ENCODE measurements at regions of chr12 and their contacts with region 1.

Region 1: DNA sequence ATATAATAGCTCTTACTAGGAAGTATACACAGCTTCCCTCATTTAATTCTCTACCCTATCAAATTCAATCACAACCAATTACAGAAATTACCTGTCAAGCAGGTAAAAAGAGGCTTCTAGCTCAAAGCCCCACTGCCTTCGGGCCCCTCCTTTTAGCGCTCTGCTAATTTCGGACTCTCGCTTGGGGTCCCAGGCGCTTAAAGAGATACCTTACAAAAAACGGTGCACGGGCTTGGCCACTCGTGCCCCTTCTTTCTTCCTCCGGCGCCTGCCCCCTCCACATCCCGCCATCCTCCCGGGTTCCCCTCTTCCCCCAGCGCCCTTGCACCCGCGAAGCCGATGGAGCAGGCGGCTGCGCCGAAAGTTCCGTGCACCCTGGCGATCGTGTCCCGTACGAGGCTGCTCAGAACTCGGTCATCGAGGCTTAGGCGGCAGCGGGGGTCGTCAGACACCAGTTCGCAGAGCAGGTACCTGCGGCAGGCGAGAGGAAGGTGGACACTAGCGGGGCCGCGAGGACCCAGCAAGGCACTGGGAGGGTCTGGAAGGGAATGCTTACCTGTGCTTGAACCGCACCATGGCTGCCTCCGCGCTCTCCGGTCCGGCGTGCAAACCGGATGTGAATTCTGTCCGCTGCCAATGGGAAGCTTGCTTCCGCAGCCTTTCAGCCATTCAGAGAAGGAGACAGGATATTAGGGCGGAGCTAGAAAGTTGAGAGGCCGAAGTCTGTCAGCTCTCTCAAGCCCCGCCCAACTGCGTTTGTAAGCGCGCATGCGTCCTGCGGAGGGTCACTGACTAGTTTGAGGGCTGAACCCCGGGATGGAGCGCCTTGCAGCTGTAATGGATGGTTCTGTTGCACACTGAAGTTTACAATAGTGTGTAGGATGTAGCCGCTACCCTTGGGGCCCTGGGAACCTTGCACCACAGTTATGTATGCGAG is at the start of gene POP5:
- DNase-seq: peak; percentile 96
- ATAC-seq: peak; percentile 89
- H3K4me3 ChIP-seq: peak within 1 kb of the TSS; percentile 82 to 95
- H3K27ac ChIP-seq: peak within 1 kb of the TSS; percentile 51
- H3K4me1 ChIP-seq: peaks cover 6 to 33% of the 10 kb centered on the region in 2 experiments
- H3K27me3 ChIP-seq: no peaks in the 10 kb centered on the region
- CTCF ChIP-seq: no peak
- POLR2A ChIP-seq: peak; percentile 44
- RAD21 ChIP-seq: no peak
- total RNA-seq, gene POP5: 66.9 TPM

Region 2: DNA sequence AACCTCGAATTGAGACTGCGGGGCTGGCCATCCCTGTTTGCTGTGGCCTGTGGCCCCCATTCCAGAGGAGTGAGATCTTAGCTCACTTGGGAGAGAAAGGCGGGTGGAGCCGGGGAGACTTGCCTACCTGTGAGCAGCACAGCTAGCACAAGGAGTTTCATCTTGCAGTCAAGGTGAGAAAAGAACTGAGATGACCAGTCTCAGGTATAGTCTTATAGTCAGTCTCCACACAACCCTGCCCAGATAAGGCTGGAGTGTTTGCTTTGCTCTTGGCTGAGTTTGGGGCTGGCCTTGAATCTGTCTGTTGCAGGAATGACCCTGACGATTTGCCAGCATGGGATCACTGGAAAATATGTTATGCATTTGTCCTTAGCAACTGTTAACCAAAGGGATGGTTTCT is 253.5 kb before region 1 on chr12 and contains the start of gene PLA2G1B:
- CTCF ChIA-PET with region 1: no interaction called
- POLR2A ChIA-PET with region 1: no interaction called
- RAD21 ChIA-PET with region 1: interaction called in 1 of 2 experiments, 3 read pairs
- intact Hi-C with region 1: loop called (anchors 5 kb)
- DNase-seq: no peak
- ATAC-seq: no peak
- H3K4me3 ChIP-seq: no peak within 1 kb of the TSS
- H3K27ac ChIP-seq: no peak within 1 kb of the TSS
- H3K4me1 ChIP-seq: peaks cover 0 to 8% of the 10 kb centered on the region in 2 experiments; a peak in 1 of 4 replicates
- H3K27me3 ChIP-seq: no peaks in the 10 kb centered on the region
- CTCF ChIP-seq: no peak
- POLR2A ChIP-seq: no peak
- RAD21 ChIP-seq: no peak
- total RNA-seq, gene PLA2G1B: 2.0 TPM

Region 3: GRCh38 chr12:120508537-120508936 is 72.5 kb before region 1 on chr12:
- CTCF ChIA-PET with region 1: no interaction called
- POLR2A ChIA-PET with region 1: no interaction called
- RAD21 ChIA-PET with region 1: no interaction called
- intact Hi-C with region 1: no loop called
- DNase-seq: no peak
- ATAC-seq: no peak
- H3K4me3 ChIP-seq: no peak overlapping the region
- H3K27ac ChIP-seq: no peak overlapping the region
- H3K4me1 ChIP-seq: no peaks in the 10 kb centered on the region
- H3K27me3 ChIP-seq: no peaks in the 10 kb centered on the region
- CTCF ChIP-seq: no peak
- POLR2A ChIP-seq: no peak
- RAD21 ChIP-seq: no peak

Region 4: DNA sequence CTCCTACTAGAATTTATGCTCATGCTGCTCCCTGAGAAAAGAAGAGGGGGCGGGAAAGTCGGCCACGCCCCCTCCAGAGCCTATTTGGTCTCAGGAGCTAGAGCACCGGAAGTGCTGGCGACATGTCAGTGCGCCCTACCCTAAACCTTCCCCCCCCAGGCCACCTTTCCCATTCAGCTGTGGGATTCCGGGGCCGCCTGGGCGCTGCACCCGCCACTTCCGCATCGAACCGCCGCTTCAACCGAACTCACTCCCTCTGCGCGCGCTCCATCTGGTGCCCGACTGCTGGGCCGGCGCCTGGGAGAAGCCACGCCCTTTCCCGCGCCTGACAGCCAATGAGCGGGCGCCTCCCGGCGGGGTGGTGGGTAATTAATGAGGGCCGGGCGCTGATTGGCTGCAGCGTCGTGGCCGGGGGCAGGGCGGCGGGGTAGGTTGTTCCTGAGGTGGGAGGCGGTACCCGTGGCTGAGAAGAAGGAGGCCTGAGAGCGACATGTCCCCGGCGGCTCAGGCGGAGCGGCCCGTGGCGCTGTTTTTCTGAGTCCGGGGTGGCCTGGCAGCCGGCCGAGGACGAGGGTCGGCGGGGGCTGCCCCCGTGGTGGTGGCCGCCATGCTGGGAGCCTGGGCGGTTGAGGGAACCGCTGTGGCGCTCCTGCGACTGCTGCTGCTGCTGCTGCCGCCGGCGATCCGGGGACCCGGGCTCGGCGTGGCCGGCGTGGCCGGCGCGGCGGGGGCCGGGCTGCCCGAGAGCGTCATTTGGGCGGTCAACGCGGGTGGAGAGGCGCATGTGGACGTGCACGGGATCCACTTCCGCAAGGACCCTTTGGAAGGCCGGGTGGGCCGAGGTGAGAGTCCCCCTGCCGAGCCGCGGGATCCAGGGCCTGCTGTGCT is 105.9 kb after region 1 on chr12 and contains the start of gene MLEC:
- CTCF ChIA-PET with region 1: interaction called, 4 read pairs
- POLR2A ChIA-PET with region 1: interaction called, 3 read pairs
- RAD21 ChIA-PET with region 1: no interaction called
- intact Hi-C with region 1: loop called (anchors 1 kb)
- DNase-seq: peak; percentile 95
- ATAC-seq: peak; percentile 83
- H3K4me3 ChIP-seq: peak within 1 kb of the TSS; percentile 84 to 92
- H3K27ac ChIP-seq: peak within 1 kb of the TSS; percentile 86
- H3K4me1 ChIP-seq: peaks cover 22 to 26% of the 10 kb centered on the region in 2 experiments
- H3K27me3 ChIP-seq: no peaks in the 10 kb centered on the region
- CTCF ChIP-seq: peak; percentile 10 to 17 (median 12); a peak in 1 of 6 replicates
- POLR2A ChIP-seq: peak; percentile 36
- RAD21 ChIP-seq: peak; percentile 58
- total RNA-seq, gene MLEC: 152 TPM

Region 5: GRCh38 chr12:120971299-120972179 is 390.5 kb after region 1 on chr12:
- CTCF ChIA-PET with region 1: interaction called, 8 read pairs
- POLR2A ChIA-PET with region 1: interaction called, 3 read pairs
- RAD21 ChIA-PET with region 1: interaction called, 4 to 6 read pairs
- intact Hi-C with region 1: loop called (anchors 1 kb)
- DNase-seq: peak; percentile 58
- ATAC-seq: peak; percentile 91
- H3K4me3 ChIP-seq: no peak overlapping the region
- H3K27ac ChIP-seq: no peak overlapping the region
- H3K4me1 ChIP-seq: no peaks in the 10 kb centered on the region
- H3K27me3 ChIP-seq: no peaks in the 10 kb centered on the region
- CTCF ChIP-seq: peak; percentile 76 to 90 (median 81)
- POLR2A ChIP-seq: no peak
- RAD21 ChIP-seq: peak; percentile 97

Region 6: DNA sequence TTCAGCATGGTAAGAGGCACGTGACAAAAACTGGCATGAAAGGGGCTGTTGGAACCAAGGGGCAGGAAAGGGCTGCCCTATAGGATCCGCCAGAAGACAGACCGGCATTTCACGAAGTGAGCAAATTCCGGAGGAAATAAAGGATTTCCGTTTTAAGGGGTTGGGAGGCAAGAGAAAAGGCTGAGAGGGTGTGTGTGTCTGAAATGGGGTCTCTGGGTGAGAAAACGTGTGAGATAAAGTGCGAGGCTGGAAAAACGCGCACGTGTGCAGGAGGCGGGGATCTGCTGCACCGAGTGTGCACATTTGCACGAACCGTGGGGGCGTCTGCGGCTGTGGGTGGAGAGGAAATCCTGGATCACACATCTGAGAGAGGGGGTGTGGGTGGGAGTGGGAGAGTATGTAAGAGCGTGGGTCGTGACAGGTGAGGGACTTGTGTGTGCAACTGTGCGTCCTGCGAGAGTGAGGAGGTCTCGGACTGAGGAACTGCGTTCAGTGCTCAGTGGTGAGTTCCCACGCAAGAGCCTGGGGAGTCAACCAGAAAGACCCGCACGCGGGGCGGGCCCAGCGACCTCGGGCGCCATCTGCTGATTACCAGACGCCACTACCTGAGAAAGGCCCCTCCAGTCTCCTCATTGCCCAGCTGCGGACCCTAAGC is 514.6 kb after region 1 on chr12:
- CTCF ChIA-PET with region 1: no interaction called
- POLR2A ChIA-PET with region 1: no interaction called
- RAD21 ChIA-PET with region 1: no interaction called
- intact Hi-C with region 1: loop called (anchors 5 kb)
- DNase-seq: peak; percentile 48
- ATAC-seq: peak; percentile 97
- H3K4me3 ChIP-seq: peak overlapping the region; percentile 36 to 52
- H3K27ac ChIP-seq: no peak overlapping the region
- H3K4me1 ChIP-seq: peaks cover 3 to 14% of the 10 kb centered on the region in 2 experiments; a peak in 3 of 4 replicates
- H3K27me3 ChIP-seq: no peaks in the 10 kb centered on the region
- CTCF ChIP-seq: peak; percentile 68 to 84 (median 70)
- POLR2A ChIP-seq: peak; percentile 23
- RAD21 ChIP-seq: peak; percentile 81

Measured in HCT116 (cell line).